SK-N-SH (cell line): ENCODE measurements at regions of chr4 and their contacts with region 1.

Region 1: GRCh38 chr4:181143250-181143854 is 1099.8 kb upstream of the TENM3 start:
- DNase-seq: peak; percentile 41
- H3K4me3 ChIP-seq: no peak overlapping the region; a peak in 1 of 4 replicates
- H3K27ac ChIP-seq: no peak overlapping the region
- H3K4me1 ChIP-seq: peaks cover 0 to 3% of the 10 kb centered on the region in 2 experiments; a peak in 1 of 4 replicates
- H3K27me3 ChIP-seq: no peaks in the 10 kb centered on the region
- CTCF ChIP-seq: peak; percentile 91
- EP300 ChIP-seq: no peak
- RAD21 ChIP-seq: peak; percentile 99

Region 2: DNA sequence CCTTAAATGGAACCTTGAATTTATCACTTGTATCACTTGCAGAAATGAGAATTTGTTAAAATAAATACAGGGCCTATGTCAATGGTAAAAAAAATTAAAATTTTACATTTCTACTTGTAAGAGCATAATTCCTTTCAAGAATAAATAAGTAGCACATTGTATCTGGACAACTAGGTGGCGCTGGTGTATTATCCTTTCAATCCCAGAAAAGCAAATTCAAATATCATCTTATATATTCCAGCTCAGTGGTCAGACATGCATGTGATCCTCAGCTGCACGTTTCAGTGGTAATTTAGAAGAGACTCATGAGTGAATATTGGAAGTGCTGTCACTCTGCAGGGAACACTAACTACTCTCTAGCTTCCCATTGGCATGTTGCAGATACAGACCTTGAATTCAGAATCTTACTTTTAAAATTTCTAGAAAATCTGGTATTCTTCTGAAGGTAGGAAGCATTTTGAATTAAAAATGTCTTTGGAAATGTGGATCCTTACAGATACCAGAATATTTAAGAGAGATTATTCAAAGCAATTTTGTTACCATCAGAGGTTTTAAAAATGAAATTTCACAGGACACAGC is 314.8 kb before region 1 on chr4:
- CTCF ChIA-PET with region 1: interaction called, 20 read pairs
- POLR2A ChIA-PET with region 1: no interaction called
- DNase-seq: peak; percentile 51
- H3K4me3 ChIP-seq: no peak overlapping the region
- H3K27ac ChIP-seq: no peak overlapping the region
- H3K4me1 ChIP-seq: peaks cover 0 to 8% of the 10 kb centered on the region in 2 experiments; a peak in 1 of 4 replicates
- H3K27me3 ChIP-seq: no peaks in the 10 kb centered on the region
- CTCF ChIP-seq: peak; percentile 82
- EP300 ChIP-seq: no peak
- RAD21 ChIP-seq: peak; percentile 93

Region 3: GRCh38 chr4:180960743-180961401 is 182.5 kb before region 1 on chr4:
- CTCF ChIA-PET with region 1: interaction called, 10 read pairs
- POLR2A ChIA-PET with region 1: no interaction called
- DNase-seq: peak; percentile 34
- H3K4me3 ChIP-seq: no peak overlapping the region
- H3K27ac ChIP-seq: peak overlapping the region in 1 of 2 experiments; percentile 96; a peak in 2 of 4 replicates
- H3K4me1 ChIP-seq: peaks cover 0 to 11% of the 10 kb centered on the region in 2 experiments; a peak in 2 of 4 replicates
- H3K27me3 ChIP-seq: no peaks in the 10 kb centered on the region
- CTCF ChIP-seq: peak; percentile 29
- EP300 ChIP-seq: peak in 1 of 2 experiments; percentile 79; a peak in 1 of 4 replicates
- RAD21 ChIP-seq: peak; percentile 85

Region 4: DNA sequence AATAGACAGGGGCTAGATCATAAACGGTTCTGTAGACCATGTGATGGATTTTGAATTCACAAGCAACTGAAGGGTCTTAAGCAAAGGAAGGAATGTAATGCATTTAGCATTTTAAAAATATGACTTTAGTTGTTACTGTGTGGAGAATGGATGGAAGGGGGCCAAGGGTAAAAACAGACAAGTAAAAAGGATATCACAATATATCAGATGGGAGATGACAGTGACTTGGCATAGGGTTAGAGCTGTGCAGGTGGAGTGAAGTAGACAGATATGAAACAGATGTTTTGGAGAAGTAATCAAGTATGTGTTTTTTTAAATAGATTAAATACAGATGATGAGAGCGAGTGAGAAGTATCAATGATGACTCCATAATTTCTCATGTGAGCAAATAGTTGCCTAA is 16.2 kb before region 1 on chr4:
- CTCF ChIA-PET with region 1: interaction called, 25 read pairs
- POLR2A ChIA-PET with region 1: no interaction called
- DNase-seq: no peak
- H3K4me3 ChIP-seq: no peak overlapping the region
- H3K27ac ChIP-seq: no peak overlapping the region
- H3K4me1 ChIP-seq: no peaks in the 10 kb centered on the region
- H3K27me3 ChIP-seq: no peaks in the 10 kb centered on the region
- CTCF ChIP-seq: no peak
- EP300 ChIP-seq: no peak
- RAD21 ChIP-seq: no peak

Region 5: GRCh38 chr4:181157647-181158046 is 14.3 kb after region 1 on chr4:
- CTCF ChIA-PET with region 1: no interaction called
- POLR2A ChIA-PET with region 1: no interaction called
- DNase-seq: no peak
- H3K4me3 ChIP-seq: no peak overlapping the region
- H3K27ac ChIP-seq: no peak overlapping the region
- H3K4me1 ChIP-seq: no peaks in the 10 kb centered on the region; a peak in 1 of 4 replicates
- H3K27me3 ChIP-seq: no peaks in the 10 kb centered on the region
- CTCF ChIP-seq: no peak
- EP300 ChIP-seq: no peak
- RAD21 ChIP-seq: no peak

Region 6: GRCh38 chr4:181261279-181261678 is 117.9 kb after region 1 on chr4:
- CTCF ChIA-PET with region 1: no interaction called
- POLR2A ChIA-PET with region 1: no interaction called
- DNase-seq: no peak
- H3K4me3 ChIP-seq: no peak overlapping the region
- H3K27ac ChIP-seq: no peak overlapping the region
- H3K4me1 ChIP-seq: no peaks in the 10 kb centered on the region; a peak in 1 of 4 replicates
- H3K27me3 ChIP-seq: no peaks in the 10 kb centered on the region
- CTCF ChIP-seq: peak; percentile 35
- EP300 ChIP-seq: no peak
- RAD21 ChIP-seq: peak; percentile 45

Region 7: DNA sequence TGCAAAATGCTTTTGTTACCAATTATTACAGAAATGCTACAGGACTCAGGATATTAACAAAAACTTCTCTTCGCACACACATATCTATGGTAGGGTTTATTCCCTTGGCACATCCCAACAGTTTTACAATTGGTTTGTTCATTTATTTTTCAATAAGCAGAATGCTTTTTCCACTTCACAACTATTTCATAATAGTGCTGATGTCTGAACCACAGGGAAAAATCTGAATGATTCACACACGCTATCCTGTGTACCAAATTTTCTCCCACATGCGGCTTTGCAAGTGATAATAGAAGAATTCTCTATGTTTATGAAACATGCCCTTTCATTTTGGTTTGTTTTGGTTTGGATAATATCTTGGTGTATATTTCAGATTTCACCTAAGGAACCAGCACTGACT is 374.1 kb after region 1 on chr4:
- CTCF ChIA-PET with region 1: interaction called, 17 read pairs
- POLR2A ChIA-PET with region 1: no interaction called
- DNase-seq: no peak
- H3K4me3 ChIP-seq: no peak overlapping the region
- H3K27ac ChIP-seq: no peak overlapping the region
- H3K4me1 ChIP-seq: peaks cover 0 to 7% of the 10 kb centered on the region in 2 experiments; a peak in 1 of 4 replicates
- H3K27me3 ChIP-seq: no peaks in the 10 kb centered on the region
- CTCF ChIP-seq: no peak
- EP300 ChIP-seq: no peak
- RAD21 ChIP-seq: no peak

Region 8: GRCh38 chr4:181528570-181529184 is 385.3 kb after region 1 on chr4:
- CTCF ChIA-PET with region 1: interaction called, 96 read pairs
- POLR2A ChIA-PET with region 1: interaction called, 3 read pairs
- DNase-seq: peak; percentile 55
- H3K4me3 ChIP-seq: peak overlapping the region in 1 of 2 experiments; percentile 30; a peak in 1 of 4 replicates
- H3K27ac ChIP-seq: no peak overlapping the region
- H3K4me1 ChIP-seq: peaks cover 0 to 5% of the 10 kb centered on the region in 2 experiments; a peak in 2 of 4 replicates
- H3K27me3 ChIP-seq: no peaks in the 10 kb centered on the region; the same call in 1 of the 2 replicates
- CTCF ChIP-seq: peak; percentile 86
- EP300 ChIP-seq: no peak
- RAD21 ChIP-seq: peak; percentile 97

Region 9: DNA sequence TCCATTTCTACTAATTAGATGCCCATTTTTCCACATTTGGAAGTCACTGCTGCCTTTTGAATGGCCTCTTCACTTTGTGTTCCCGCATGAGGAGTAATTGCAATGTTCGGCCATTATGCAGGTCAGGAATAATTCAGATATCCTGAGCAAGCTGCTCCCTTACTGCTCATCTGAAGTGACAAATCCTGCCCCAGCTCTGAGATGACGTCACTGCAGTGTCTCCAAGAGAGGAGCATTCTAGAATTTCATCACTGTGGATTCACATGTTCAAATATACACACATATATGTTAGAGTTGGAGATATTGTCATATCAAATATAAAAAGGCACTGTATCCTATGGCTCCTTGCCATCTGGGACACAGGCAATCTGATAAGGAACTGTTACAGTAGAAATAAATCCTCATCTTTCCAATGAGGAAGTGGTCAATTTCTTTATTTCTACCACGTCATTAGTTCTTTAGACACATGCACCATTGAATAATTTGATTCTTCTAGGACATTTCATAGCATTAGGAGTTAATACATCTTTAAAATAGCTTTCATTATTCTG is 392.9 kb after region 1 on chr4:
- CTCF ChIA-PET with region 1: interaction called, 12 read pairs
- POLR2A ChIA-PET with region 1: no interaction called
- DNase-seq: no peak
- H3K4me3 ChIP-seq: no peak overlapping the region
- H3K27ac ChIP-seq: no peak overlapping the region
- H3K4me1 ChIP-seq: no peaks in the 10 kb centered on the region
- H3K27me3 ChIP-seq: no peaks in the 10 kb centered on the region; the same call in 1 of the 2 replicates
- CTCF ChIP-seq: no peak
- EP300 ChIP-seq: no peak
- RAD21 ChIP-seq: no peak